CD8-positive, alpha-beta memory T cell (primary cell): ENCODE measurements at regions of chr5 and their contacts with region 1.

Region 1: DNA sequence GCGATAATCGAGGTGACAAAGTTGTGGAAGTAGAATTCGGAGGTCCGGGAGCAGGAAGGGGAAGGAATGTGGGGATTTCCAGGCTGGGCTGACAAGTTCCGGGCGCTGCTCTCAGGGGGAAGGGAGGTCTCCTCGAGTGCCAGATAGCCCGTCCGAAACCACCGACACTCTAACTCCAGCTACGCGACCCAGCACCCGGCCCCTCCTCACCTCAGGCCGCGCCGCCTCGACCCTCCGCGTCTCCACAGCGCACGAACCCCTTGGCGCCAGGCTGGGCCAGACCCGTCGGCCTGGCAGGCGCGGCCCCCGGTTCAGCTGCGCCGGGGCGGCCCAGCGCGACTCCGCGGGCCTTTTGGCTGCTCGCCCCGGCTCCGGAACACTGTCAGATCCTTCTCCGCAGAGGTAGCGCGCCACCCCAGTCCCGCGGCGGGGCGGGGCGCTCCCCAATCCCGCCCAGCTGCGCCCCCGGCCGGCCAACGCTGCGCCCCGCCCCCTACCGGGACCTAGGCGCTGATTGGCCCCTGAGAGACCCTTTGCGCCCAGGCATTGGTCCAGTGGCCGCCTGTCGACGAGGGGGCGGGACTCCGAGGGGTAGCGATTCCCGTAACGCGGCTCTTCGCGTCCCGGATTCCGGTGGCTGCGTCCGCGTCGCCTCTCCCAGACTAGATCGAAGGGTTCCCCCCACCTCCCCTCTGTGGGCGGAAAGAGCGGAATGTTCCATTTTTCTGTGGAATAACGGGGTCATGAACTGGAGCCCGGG is at the start of gene IL6ST:
- DNase-seq: peak; percentile 93 to 96 (median 95)
- H3K4me3 ChIP-seq: peak within 1 kb of the TSS; percentile 93
- H3K4me3 Mint-ChIP-seq: peak within 1 kb of the TSS; percentile 90 to 99 (median 96)
- H3K27ac ChIP-seq: peak within 1 kb of the TSS; percentile 94
- H3K27ac Mint-ChIP-seq: peak within 1 kb of the TSS; percentile 91 to 99 (median 98)
- H3K4me1 ChIP-seq: peaks cover 20% of the 10 kb centered on the region
- H3K4me1 Mint-ChIP-seq: peaks cover 42 to 63% (median 58%) of the 10 kb centered on the region in 3 donors
- H3K27me3 ChIP-seq: no peaks in the 10 kb centered on the region
- H3K27me3 Mint-ChIP-seq: no peaks in the 10 kb centered on the region
- total RNA-seq, gene IL6ST: 52.2 to 60.0 TPM

Region 2: GRCh38 chr5:55982957-55983381 is 11.8 kb before region 1 on chr5:
- CTCF ChIA-PET with region 1: interaction called, 6 read pairs
- POLR2A ChIA-PET with region 1: interaction called, 10 read pairs
- DNase-seq: peak in 1 of 5 donors; percentile 47
- H3K4me3 ChIP-seq: peak overlapping the region; percentile 37
- H3K4me3 Mint-ChIP-seq: no peak overlapping the region
- H3K27ac ChIP-seq: no peak overlapping the region
- H3K27ac Mint-ChIP-seq: peak overlapping the region in 1 of 8 donors; percentile 32
- H3K4me1 ChIP-seq: peaks cover 74% of the 10 kb centered on the region
- H3K4me1 Mint-ChIP-seq: peaks cover 35 to 77% (median 57%) of the 10 kb centered on the region in 3 donors
- H3K27me3 ChIP-seq: no peaks in the 10 kb centered on the region
- H3K27me3 Mint-ChIP-seq: no peaks in the 10 kb centered on the region

Region 3: GRCh38 chr5:56012281-56012963 is 17.7 kb after region 1 on chr5:
- CTCF ChIA-PET with region 1: no interaction called
- POLR2A ChIA-PET with region 1: interaction called, 10 read pairs
- DNase-seq: peak in 3 of 5 donors; percentile 2 to 57 (median 30)
- H3K4me3 ChIP-seq: peak overlapping the region; percentile 9
- H3K4me3 Mint-ChIP-seq: peak overlapping the region in 5 of 7 donors; percentile 2 to 71 (median 7)
- H3K27ac ChIP-seq: no peak overlapping the region
- H3K27ac Mint-ChIP-seq: peak overlapping the region; percentile 21 to 91 (median 58)
- H3K4me1 ChIP-seq: peaks cover 28% of the 10 kb centered on the region
- H3K4me1 Mint-ChIP-seq: peaks cover 14 to 22% (median 18%) of the 10 kb centered on the region in 3 donors
- H3K27me3 ChIP-seq: no peaks in the 10 kb centered on the region
- H3K27me3 Mint-ChIP-seq: peaks cover 0 to 1% of the 10 kb centered on the region in 2 donors

Region 4: DNA sequence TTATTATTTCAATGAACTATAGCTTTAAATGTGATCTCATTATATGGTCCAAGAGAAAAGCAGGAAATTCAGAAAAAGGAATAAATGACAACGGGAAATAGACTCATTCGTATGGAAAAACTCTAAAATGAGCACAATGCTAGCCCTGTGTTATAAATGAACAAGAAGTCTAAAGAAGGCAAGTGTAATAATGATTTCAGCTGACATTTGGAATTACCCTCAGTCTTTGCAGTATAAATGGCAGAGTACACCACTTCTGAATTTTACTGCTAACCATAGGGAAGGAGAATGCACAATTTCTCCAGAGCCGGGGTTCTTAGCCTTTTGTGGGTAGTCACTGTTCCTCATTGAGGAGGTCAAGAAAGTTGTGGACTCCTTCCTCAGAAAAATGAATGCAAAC is 145.3 kb after region 1 on chr5:
- CTCF ChIA-PET with region 1: no interaction called
- POLR2A ChIA-PET with region 1: no interaction called
- DNase-seq: no peak
- H3K4me3 ChIP-seq: no peak overlapping the region
- H3K4me3 Mint-ChIP-seq: no peak overlapping the region
- H3K27ac ChIP-seq: no peak overlapping the region
- H3K27ac Mint-ChIP-seq: no peak overlapping the region
- H3K4me1 ChIP-seq: peaks cover 31% of the 10 kb centered on the region
- H3K4me1 Mint-ChIP-seq: peaks cover 0 to 5% (median 0%) of the 10 kb centered on the region in 3 donors
- H3K27me3 ChIP-seq: no peaks in the 10 kb centered on the region
- H3K27me3 Mint-ChIP-seq: peaks cover 0 to 3% of the 10 kb centered on the region in 2 donors